GM12878 (cell line): ENCODE measurements at regions of chr1 and their contacts with region 1.

Region 1: DNA sequence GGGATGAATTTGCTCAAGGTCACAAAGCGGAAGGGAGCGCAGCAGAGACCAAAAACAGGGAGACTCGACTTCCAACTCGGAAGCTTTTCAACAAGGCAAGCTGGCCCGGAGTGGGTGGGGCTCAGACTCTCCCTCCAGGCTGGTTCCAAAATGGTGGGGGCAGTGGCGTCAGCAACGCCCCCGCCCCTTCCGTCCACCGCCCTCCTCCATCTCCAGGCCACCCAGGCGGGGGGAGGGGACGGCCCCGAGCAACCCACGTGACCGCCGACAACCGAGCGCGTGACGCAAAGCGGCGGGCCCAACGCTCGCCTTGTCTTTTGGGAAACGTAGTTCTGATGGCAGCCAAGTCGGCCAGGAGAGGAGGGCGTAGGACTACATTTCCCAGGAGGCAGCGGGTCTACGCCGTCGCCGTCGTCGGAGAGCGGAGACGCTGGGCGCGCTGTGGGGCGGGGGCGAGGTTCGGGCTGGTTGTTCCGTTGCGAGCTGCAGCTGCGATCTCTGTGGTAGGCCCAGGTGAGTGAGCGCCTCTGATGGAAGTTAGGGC is at the start of gene THRAP3:
- DNase-seq: peak; percentile 97
- ATAC-seq: peak; percentile 95
- H3K4me3 ChIP-seq: peak within 1 kb of the TSS; percentile 95
- H3K27ac ChIP-seq: peak within 1 kb of the TSS; percentile 88
- H3K4me1 ChIP-seq: peaks cover 7% of the 10 kb centered on the region; the same call in 1 of the 2 replicates
- H3K27me3 ChIP-seq: no peaks in the 10 kb centered on the region
- CTCF ChIP-seq: no peak
- EP300 ChIP-seq: 0 out of 4 replicates have a peak, but pooled peaks of 1 of the 2 experiments have one; percentile 17
- POLR2A ChIP-seq: peak; percentile 91
- RAD21 ChIP-seq: no peak
- polyA plus RNA-seq, gene THRAP3: 76.3 to 173 TPM

Region 2: DNA sequence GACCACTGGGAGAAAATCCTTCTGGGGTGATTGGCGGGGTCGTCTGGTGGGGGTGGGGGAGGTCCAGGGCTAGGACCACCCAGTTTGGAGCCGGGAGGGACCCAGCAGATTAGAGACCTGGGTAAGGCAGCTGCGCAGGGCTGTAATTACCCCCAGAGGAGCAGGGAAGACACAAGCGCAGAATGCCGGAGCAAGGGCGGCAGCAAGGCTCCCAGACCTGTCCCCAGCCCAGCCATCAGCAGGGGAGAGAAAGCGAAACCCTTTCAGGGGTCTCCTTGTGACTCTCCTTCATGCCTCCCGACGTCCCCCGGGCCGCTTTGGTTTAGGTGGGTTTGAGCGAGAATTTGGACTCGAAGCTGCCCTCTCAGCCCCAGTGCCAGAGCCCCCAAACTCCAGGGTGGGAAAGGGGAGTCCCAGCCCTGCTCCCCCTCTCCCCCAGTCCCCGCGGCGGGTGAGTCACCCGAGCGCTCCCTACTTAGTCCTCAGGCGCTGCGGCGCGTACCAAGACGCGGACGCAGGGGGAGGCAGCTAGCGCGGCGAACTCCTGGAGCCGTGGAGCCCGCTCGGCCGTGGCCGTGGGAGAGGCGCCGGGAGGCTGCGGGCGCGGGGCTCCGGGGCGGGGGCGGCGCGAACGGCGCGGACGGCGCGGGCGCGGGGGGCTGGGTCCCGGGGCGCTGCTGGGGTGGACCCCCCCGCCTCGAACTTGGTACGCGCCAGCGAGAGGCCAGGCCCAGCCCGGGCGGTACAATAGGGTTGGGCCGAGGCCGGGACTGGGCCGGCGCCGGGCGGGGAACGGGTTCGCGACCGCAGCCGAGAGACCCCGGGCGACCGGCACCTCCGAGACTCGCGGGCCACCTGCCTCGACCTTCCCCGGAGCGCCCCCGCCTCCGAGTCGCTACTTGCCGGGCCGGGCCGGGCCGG is 68.4 kb before region 1 on chr1 and contains the start of gene MAP7D1:
- CTCF ChIA-PET with region 1: interaction called, 29 read pairs
- POLR2A ChIA-PET with region 1: interaction called, 23 read pairs
- RAD21 ChIA-PET with region 1: interaction called, 54 read pairs
- SMC1A ChIA-PET with region 1: interaction called, 27 read pairs
- in situ Hi-C with region 1: no loop called
- intact Hi-C with region 1: no loop called
- DNase-seq: no peak
- ATAC-seq: peak; percentile 53
- H3K4me3 ChIP-seq: peak within 1 kb of the TSS; percentile 99
- H3K27ac ChIP-seq: peak within 1 kb of the TSS; percentile 85
- H3K4me1 ChIP-seq: peaks cover 47% of the 10 kb centered on the region
- H3K27me3 ChIP-seq: no peaks in the 10 kb centered on the region
- CTCF ChIP-seq: no peak
- EP300 ChIP-seq: no peak
- POLR2A ChIP-seq: peak; percentile 93
- RAD21 ChIP-seq: no peak
- polyA plus RNA-seq, gene MAP7D1: 4.4 to 11.2 TPM

Region 3: GRCh38 chr1:36160949-36161485 is 63.0 kb before region 1 on chr1:
- CTCF ChIA-PET with region 1: interaction called, 5 read pairs
- POLR2A ChIA-PET with region 1: interaction called, 23 read pairs
- RAD21 ChIA-PET with region 1: interaction called, 19 read pairs
- SMC1A ChIA-PET with region 1: interaction called, 9 read pairs
- in situ Hi-C with region 1: no loop called
- intact Hi-C with region 1: no loop called
- DNase-seq: no peak
- ATAC-seq: peak; percentile 76
- H3K4me3 ChIP-seq: peak overlapping the region; percentile 85
- H3K27ac ChIP-seq: peak overlapping the region; percentile 95
- H3K4me1 ChIP-seq: peaks cover 51% of the 10 kb centered on the region
- H3K27me3 ChIP-seq: no peaks in the 10 kb centered on the region
- CTCF ChIP-seq: peak; percentile 32 to 49 (median 44); a peak in 3 of 6 replicates
- EP300 ChIP-seq: no peak
- POLR2A ChIP-seq: peak; percentile 82
- RAD21 ChIP-seq: no peak

Region 4: DNA sequence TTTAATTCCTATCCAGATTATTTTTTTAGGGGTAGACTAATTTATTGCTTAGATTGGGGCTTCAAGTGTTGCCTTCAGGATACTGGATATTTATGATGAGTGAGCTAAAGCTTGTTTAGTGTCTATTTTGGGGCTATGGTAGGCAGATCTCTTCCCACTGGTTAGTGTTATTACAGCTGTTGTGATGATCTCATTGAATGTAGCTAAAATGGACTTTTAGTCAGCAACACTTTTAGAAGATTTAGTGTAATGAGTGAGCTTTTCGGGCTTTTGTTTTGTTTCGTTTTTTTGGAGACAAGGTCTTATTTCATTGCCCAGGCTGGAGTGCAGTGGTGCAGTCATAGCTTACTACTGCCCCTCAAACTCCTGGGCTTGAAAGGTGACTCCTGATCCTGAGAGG is 14.4 kb after region 1 on chr1:
- CTCF ChIA-PET with region 1: interaction called, 3 read pairs
- POLR2A ChIA-PET with region 1: interaction called, 10 read pairs
- RAD21 ChIA-PET with region 1: interaction called, 9 read pairs
- SMC1A ChIA-PET with region 1: interaction called, 6 read pairs
- in situ Hi-C with region 1: no loop called
- intact Hi-C with region 1: no loop called
- DNase-seq: no peak
- ATAC-seq: no peak
- H3K4me3 ChIP-seq: no peak overlapping the region
- H3K27ac ChIP-seq: no peak overlapping the region
- H3K4me1 ChIP-seq: no peaks in the 10 kb centered on the region
- H3K27me3 ChIP-seq: no peaks in the 10 kb centered on the region
- CTCF ChIP-seq: no peak
- EP300 ChIP-seq: no peak
- POLR2A ChIP-seq: no peak
- RAD21 ChIP-seq: no peak

Region 5: GRCh38 chr1:36248250-36248894 is 24.3 kb after region 1 on chr1:
- CTCF ChIA-PET with region 1: interaction called, 3 read pairs
- POLR2A ChIA-PET with region 1: interaction called, 10 read pairs
- RAD21 ChIA-PET with region 1: no interaction called
- SMC1A ChIA-PET with region 1: no interaction called
- in situ Hi-C with region 1: no loop called
- intact Hi-C with region 1: no loop called
- DNase-seq: no peak
- ATAC-seq: no peak
- H3K4me3 ChIP-seq: no peak overlapping the region
- H3K27ac ChIP-seq: no peak overlapping the region
- H3K4me1 ChIP-seq: no peaks in the 10 kb centered on the region
- H3K27me3 ChIP-seq: no peaks in the 10 kb centered on the region
- CTCF ChIP-seq: no peak
- EP300 ChIP-seq: no peak
- POLR2A ChIP-seq: no peak
- RAD21 ChIP-seq: no peak

Region 6: DNA sequence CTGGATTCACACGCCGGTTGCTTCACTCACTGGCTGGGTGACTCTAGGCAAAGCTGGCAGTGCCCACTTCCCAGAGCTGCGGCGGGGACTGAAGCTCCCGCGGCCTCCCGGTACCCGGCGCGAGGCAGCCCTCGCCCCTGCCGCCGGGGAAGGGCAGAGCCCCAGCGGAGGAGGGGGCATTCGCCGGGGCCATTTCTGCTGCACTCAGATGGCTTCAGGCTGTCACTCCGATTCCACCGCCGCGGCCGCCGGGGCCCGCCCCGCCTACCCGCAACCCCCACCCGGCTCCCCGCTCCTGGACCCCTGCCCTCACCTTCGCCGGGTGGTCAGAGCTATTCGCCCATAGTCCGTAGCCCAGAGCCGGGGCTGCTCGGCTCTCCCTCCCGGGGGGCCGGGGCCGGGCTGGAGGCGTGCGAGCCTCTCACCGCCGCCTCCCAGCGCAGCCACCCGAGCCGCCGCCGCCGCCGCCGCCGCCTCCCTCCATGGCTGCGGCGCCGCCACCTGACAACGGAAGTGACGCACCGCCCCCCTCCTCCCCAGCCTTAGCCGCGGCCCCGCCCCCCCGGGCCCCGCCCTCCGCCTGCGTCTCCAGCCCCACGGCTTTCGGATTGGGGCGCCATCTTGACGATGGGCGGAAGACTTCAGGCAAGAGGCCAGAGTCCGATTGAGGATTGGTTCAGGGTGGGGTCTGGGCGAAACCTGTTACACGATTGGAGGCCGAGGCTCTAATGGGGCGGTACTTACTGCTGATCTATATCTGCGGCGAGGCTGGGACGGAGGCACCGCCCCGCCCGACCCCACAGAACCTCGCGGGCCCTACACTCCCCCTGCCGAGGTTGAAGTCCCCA is 161.6 kb after region 1 on chr1 and contains the start of gene STK40:
- CTCF ChIA-PET with region 1: no interaction called
- POLR2A ChIA-PET with region 1: interaction called, 6 read pairs
- RAD21 ChIA-PET with region 1: interaction called, 4 read pairs
- SMC1A ChIA-PET with region 1: no interaction called
- in situ Hi-C with region 1: no loop called
- intact Hi-C with region 1: loop called (anchors 10 kb)
- DNase-seq: peak; percentile 95
- ATAC-seq: peak; percentile 90
- H3K4me3 ChIP-seq: peak within 1 kb of the TSS; percentile 85
- H3K27ac ChIP-seq: peak within 1 kb of the TSS; percentile 99
- H3K4me1 ChIP-seq: peaks cover 44% of the 10 kb centered on the region
- H3K27me3 ChIP-seq: no peaks in the 10 kb centered on the region
- CTCF ChIP-seq: no peak
- EP300 ChIP-seq: no peak
- POLR2A ChIP-seq: peak; percentile 50
- RAD21 ChIP-seq: no peak
- polyA plus RNA-seq, gene STK40: 0.27 to 2.1 TPM